ENCODE measurements at regions of chr15 and their contacts with region 1.

Region 1: DNA sequence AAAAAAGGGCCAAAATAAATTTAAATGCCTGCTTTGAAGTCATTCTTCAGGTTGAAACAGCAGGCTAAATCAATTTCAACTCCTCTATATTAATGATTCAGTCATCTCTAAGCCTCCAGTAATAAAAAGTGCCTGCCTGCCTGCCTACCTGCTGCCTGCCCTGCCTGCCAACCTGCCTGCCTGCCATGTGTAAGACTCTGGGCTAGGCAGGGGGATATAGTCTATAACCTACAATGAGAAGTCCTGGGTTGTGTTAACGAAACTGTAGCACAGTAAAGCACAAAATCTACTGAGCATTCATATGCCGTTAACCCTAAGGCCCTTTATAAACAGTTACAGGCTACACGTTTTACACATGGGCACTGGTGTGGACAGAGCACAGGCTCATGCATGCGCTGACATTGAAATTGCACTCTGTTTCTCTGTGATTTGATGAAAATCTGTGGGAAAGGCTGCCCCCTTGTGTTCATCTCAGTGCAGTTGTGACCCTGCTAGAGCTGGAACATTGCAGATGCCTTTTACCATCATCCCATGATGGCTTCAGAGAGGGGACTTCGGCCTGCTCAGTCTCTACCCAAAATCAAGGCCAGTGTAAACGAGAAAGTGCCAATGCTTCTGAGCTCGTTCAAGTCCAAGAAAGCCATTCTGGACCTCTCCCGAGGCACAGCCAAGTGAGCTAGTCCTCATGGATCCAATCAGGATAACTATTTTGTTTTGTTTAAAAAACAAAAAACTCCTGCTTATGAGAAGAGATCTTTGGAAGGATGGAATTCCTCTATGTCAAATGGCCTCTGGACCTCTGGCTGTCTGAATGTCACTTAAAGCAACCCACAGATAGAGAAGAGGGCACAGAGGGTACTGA is 64.6 kb downstream of the EFL1 start:
- DNase-seq: peak; percentile 60
- H3K4me3 ChIP-seq: no peak overlapping the region
- H3K27ac ChIP-seq: no peak overlapping the region
- H3K4me1 ChIP-seq: no peaks in the 10 kb centered on the region
- H3K27me3 ChIP-seq: no peaks in the 10 kb centered on the region
- CTCF ChIP-seq: peak; percentile 59 to 73 (median 70)
- EP300 ChIP-seq: no peak
- POLR2A ChIP-seq: no peak

Region 2: DNA sequence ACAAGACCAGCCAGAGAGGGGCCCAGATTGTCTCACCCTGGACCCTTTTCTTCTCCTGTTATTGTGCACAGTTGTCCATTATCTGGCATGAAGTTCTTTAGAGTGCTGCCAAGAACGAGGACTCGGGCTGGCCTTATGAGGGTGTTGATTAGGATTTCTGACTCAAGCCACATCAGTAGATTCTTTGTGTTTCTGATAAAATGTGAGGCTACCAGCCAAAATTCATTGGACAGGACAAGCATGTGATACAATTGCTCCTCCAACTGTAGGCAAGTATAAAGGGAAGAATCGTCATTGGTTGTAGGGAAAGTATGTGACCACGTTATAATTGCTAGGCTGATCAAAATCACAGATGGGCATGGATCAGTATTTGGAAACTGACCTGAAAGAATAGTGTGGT is 724.8 kb before region 1 on chr15:
- in situ Hi-C with region 1: loop called in 1 of 4 experiments (anchors 10 kb)
- intact Hi-C with region 1: no loop called
- DNase-seq: no peak
- H3K4me3 ChIP-seq: no peak overlapping the region
- H3K27ac ChIP-seq: no peak overlapping the region
- H3K4me1 ChIP-seq: no peaks in the 10 kb centered on the region
- H3K27me3 ChIP-seq: no peaks in the 10 kb centered on the region
- CTCF ChIP-seq: no peak
- EP300 ChIP-seq: no peak
- POLR2A ChIP-seq: no peak

Region 3: DNA sequence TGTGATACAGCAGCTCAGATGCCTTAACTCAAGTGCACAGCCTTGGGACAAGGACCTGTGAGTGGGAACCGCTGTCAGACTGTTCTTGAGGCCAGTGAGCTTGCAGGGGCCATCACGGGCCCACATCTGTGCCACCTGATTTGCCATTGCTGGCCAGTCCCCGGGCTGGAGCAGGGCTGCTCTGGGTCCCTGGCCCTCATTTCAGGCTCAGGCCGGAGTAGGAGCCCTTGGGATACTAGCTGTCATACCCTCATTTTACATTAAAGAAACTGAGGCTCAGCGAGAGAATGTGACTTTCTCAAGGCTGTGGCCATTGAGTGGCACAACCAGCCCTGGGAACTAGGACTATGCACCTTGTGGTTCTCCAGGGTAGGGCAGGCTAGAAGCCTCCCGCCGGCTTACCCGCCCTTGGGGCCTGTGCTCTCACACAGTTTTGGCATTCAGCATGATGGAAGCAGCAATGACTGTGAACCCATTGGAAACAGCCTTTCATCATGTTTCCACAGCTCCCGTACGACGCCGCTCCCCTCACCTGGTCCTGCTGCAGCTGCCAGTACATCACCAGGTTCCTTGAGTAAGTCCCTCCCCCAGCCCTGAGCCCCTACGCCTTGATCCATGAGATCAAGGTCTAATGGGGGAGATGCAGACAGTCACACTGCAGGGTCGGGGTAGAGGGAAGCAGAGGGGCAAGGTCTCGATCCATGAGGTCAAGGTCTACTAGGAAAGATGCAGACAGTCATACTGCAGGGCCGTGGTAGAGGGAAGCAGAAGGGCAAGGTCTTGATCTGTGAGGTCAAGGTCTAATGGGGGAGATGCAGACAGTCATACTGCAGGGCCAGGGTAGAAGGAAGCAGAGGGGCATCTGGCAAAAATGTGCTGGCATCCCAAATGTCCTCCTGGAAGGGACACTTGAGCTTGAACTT is 109.1 kb after region 1 on chr15:
- in situ Hi-C with region 1: no loop called
- intact Hi-C with region 1: no loop called
- DNase-seq: no peak
- H3K4me3 ChIP-seq: no peak overlapping the region
- H3K27ac ChIP-seq: no peak overlapping the region
- H3K4me1 ChIP-seq: no peaks in the 10 kb centered on the region
- H3K27me3 ChIP-seq: no peaks in the 10 kb centered on the region
- CTCF ChIP-seq: no peak
- EP300 ChIP-seq: no peak
- POLR2A ChIP-seq: no peak